ENCODE measurements at regions of chr19 and their contacts with region 1.

Region 1: DNA sequence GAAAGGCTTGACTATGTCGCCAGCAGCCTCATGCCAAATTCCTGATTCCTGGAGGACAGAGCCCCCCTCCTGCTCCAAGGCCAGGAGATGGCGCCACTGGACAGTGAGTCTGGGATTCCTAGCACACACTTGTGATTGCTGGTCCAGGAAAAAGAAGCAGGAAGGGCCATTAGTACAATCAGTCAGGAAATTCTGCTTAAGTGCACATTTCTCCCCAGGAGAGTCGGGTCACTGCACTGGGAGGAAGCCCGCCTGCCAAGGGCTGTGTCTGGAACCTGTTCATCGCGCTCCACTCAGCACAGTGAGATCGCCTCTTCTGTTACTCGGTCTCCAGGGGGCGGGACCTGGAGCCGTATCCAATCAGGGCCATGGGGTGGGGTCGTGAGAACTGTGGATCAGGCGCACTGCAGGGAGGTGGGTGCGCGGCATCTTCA is 65.1 kb downstream of the ZNF823 start:
- DNase-seq: peak; percentile 68
- ATAC-seq: peak; percentile 93
- H3K4me3 ChIP-seq: no peak overlapping the region
- H3K27ac ChIP-seq: no peak overlapping the region
- H3K4me1 ChIP-seq: no peaks in the 10 kb centered on the region
- H3K27me3 ChIP-seq: no peaks in the 10 kb centered on the region
- CTCF ChIP-seq: peak; percentile 89
- EP300 ChIP-seq: no peak
- POLR2A ChIP-seq: no peak
- RAD21 ChIP-seq: peak; percentile 75

Region 2: GRCh38 chr19:11781295-11782052 is 107.8 kb after region 1 on chr19:
- CTCF ChIA-PET with region 1: interaction called, 5 read pairs
- POLR2A ChIA-PET with region 1: no interaction called
- in situ Hi-C with region 1: loop called (anchors 10 kb)
- intact Hi-C with region 1: loop called (anchors 1 kb)
- DNase-seq: peak; percentile 36
- ATAC-seq: no peak
- H3K4me3 ChIP-seq: no peak overlapping the region
- H3K27ac ChIP-seq: no peak overlapping the region
- H3K4me1 ChIP-seq: peaks cover 12% of the 10 kb centered on the region
- H3K27me3 ChIP-seq: no peaks in the 10 kb centered on the region
- CTCF ChIP-seq: no peak
- EP300 ChIP-seq: no peak
- POLR2A ChIP-seq: no peak
- RAD21 ChIP-seq: no peak